ENCODE measurements at regions of chr4 and their contacts with region 1.

Region 1: DNA sequence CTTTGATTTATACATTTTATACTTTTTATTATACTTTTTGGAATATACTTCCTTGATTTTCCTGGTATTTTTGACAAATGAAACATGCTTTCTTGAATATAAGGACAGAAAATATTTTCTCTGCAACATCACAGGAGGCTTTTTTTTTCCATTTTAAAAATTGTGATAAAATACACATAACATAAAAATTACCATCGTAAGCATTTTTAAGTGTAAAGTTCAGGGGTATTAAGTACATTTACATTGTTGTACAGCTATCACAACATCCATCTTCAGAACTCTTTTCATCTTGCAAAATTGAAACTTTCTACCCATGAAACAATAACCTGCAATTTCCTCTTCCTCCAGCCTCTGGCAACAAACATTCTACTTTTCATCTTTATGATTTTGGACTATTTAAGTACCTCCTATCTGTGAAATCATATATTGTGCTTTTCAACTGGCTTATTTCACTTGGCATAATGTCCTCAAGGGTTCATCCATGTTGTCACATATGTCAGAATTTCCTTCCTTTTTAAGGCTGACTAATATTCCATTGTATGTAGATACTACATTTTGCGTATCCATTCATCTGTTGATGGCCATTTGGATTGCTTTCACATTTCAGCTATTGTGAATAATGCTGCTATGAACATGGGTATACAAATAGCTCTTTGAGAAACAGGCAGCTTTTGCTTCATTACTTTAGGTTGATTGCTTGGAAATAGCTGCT is 412.6 kb downstream of the RAPGEF2 start:
- DNase-seq: no peak
- H3K4me3 Mint-ChIP-seq: no peak overlapping the region
- H3K27ac Mint-ChIP-seq: no peak overlapping the region
- H3K4me1 Mint-ChIP-seq: no peaks in the 10 kb centered on the region
- H3K27me3 Mint-ChIP-seq: no peaks in the 10 kb centered on the region
- CTCF ChIP-seq: no peak

Region 2: GRCh38 chr4:159212675-159213293 is 302.7 kb before region 1 on chr4:
- CTCF ChIA-PET with region 1: interaction called, 10 read pairs
- intact Hi-C with region 1: no loop called
- DNase-seq: no peak
- H3K4me3 Mint-ChIP-seq: no peak overlapping the region
- H3K27ac Mint-ChIP-seq: no peak overlapping the region
- H3K4me1 Mint-ChIP-seq: no peaks in the 10 kb centered on the region
- H3K27me3 Mint-ChIP-seq: no peaks in the 10 kb centered on the region
- CTCF ChIP-seq: no peak

Region 3: GRCh38 chr4:159487284-159487747 is 28.2 kb before region 1 on chr4:
- CTCF ChIA-PET with region 1: no interaction called
- intact Hi-C with region 1: no loop called
- DNase-seq: peak; percentile 59
- H3K4me3 Mint-ChIP-seq: peak overlapping the region; percentile 34
- H3K27ac Mint-ChIP-seq: no peak overlapping the region
- H3K4me1 Mint-ChIP-seq: no peaks in the 10 kb centered on the region
- H3K27me3 Mint-ChIP-seq: no peaks in the 10 kb centered on the region
- CTCF ChIP-seq: peak; percentile 52

Measured in Calu3 (cell line).